GM12878 (cell line): ENCODE measurements at regions of chr9 and their contacts with region 1.

Region 1: DNA sequence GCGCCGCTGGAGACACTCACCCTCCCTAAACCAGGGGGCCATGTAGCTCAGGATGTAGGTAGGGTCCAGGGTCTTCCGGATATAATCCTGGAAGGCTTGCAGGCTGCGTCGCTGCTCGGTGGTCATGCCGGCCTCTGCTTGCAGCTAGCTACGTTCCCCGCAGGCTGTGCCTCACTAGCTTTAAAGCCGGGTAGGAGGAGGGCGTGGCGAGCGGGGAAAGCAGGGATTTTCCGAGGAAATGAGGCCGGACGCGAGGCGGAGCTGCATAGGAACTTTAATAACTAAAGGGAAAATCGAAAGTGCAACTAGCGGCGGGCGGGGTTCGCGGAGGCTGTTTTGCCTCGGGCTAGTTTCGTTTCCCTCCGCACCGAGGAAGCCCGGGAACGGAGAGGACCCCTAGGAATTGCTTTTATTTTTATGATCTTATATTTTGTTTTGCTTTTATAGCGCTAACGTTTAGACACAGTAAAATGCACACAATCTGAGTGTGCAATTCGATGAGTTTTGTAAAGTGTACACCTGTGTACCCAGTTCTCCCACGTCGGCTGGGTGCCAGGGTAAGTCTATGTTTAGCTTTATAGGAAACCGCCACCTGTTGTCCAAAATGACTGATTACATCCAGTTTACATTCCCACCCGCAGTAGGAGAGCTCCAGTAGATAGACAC is at the start of gene RIGI:
- DNase-seq: peak; percentile 51
- ATAC-seq: peak; percentile 76
- H3K4me3 ChIP-seq: peak within 1 kb of the TSS; percentile 98
- H3K27ac ChIP-seq: peak within 1 kb of the TSS; percentile 84
- H3K4me1 ChIP-seq: no peaks in the 10 kb centered on the region; the same call in 1 of the 2 replicates
- H3K27me3 ChIP-seq: no peaks in the 10 kb centered on the region
- CTCF ChIP-seq: peak; percentile 24 to 39 (median 34); a peak in 5 of 6 replicates
- EP300 ChIP-seq: no peak
- POLR2A ChIP-seq: peak; percentile 62
- RAD21 ChIP-seq: peak; percentile 21; the same call in 1 of the 2 replicates
- polyA plus RNA-seq, gene RIGI: 6.3 to 7.2 TPM

Region 2: GRCh38 chr9:32384364-32385151 is 141.6 kb before region 1 on chr9 and contains the start of gene ACO1:
- CTCF ChIA-PET with region 1: interaction called, 58 read pairs
- POLR2A ChIA-PET with region 1: interaction called, 9 read pairs
- RAD21 ChIA-PET with region 1: interaction called, 36 read pairs
- SMC1A ChIA-PET with region 1: interaction called, 40 read pairs
- in situ Hi-C with region 1: no loop called
- intact Hi-C with region 1: no loop called
- DNase-seq: peak; percentile 28
- ATAC-seq: peak; percentile 99
- H3K4me3 ChIP-seq: peak within 1 kb of the TSS; percentile 69
- H3K27ac ChIP-seq: no peak within 1 kb of the TSS
- H3K4me1 ChIP-seq: 0 out of 2 replicates have a peak, but pooled peaks cover 3% of the 10 kb centered on the region
- H3K27me3 ChIP-seq: no peaks in the 10 kb centered on the region; a peak in 2 of 4 replicates
- CTCF ChIP-seq: peak in 1 of 3 experiments; percentile 24; a peak in 1 of 6 replicates
- EP300 ChIP-seq: no peak
- POLR2A ChIP-seq: peak; percentile 82
- RAD21 ChIP-seq: no peak
- polyA plus RNA-seq, gene ACO1: 0.21 to 0.53 TPM

Region 3: DNA sequence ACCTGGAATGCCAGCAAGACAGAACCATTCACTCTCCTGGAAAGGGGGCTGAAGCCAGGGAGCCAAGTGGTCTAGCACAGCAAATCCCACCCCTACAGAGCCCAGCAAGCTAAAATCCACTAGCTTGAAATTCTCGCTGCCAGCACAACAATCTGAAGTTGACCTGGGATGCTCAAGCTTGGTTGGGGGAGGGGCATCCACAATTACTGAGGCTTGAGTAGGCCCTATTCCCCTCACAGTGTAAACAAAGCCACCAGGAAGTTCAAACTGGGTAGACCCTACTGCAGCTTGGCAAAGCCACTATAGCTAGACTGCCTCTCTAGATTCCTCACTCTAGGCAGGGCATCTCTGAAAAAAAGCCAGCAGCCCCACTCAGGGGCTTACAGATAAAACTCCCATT is 17.4 kb before region 1 on chr9:
- CTCF ChIA-PET with region 1: interaction called, 12 read pairs
- POLR2A ChIA-PET with region 1: interaction called, 3 read pairs
- RAD21 ChIA-PET with region 1: no interaction called
- SMC1A ChIA-PET with region 1: interaction called, 6 read pairs
- in situ Hi-C with region 1: no loop called
- intact Hi-C with region 1: no loop called
- DNase-seq: no peak
- ATAC-seq: no peak
- H3K4me3 ChIP-seq: no peak overlapping the region
- H3K27ac ChIP-seq: no peak overlapping the region
- H3K4me1 ChIP-seq: no peaks in the 10 kb centered on the region
- H3K27me3 ChIP-seq: no peaks in the 10 kb centered on the region
- CTCF ChIP-seq: no peak
- EP300 ChIP-seq: no peak
- POLR2A ChIP-seq: no peak
- RAD21 ChIP-seq: no peak

Region 4: DNA sequence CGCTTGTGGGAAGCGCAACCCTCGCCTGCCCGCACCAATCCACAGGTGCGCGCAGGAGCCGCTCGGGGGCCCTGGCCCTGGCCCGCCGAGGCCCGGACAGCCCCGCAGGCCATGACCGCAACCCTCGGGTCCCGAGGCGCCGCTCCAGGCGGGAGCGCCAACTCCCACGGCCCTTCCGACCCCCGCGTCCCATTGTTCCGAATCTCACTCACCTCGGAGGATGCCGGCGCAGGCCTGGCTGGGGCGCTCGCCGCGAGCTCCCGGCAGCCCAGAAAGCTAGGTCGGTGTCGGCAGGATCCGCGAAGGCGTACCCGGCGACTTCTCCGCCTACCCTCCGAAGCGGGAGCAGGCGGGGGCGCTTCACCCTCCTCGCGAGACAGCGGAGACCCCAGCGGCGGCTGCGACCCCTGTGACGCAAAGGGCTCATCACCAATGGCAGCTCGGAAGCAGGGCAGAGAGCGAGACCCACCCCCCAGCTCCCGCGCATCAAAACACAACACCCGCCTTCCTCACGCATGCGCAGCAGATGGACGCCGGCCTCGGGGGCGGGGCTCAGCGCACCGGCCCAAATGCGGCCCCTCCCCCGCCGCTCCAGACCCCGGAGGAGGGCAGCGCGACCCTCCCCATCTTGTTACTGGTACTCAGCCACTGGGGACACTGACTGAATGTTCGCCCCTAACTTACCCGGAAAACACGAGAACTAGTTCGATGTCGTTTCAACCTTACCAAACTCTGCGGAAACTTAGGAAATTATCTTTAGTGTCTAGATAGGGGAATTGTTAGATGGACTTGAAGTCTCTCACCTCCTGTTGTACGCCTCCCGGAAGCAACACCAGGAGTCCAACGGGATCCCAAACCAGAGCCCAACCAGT is 24.6 kb after region 1 on chr9:
- CTCF ChIA-PET with region 1: interaction called, 22 read pairs
- POLR2A ChIA-PET with region 1: interaction called, 19 read pairs
- RAD21 ChIA-PET with region 1: interaction called, 23 read pairs
- SMC1A ChIA-PET with region 1: interaction called, 29 read pairs
- in situ Hi-C with region 1: no loop called
- intact Hi-C with region 1: loop called (anchors 1 kb)
- DNase-seq: peak; percentile 64
- ATAC-seq: peak; percentile 79
- H3K4me3 ChIP-seq: peak overlapping the region; percentile 83
- H3K27ac ChIP-seq: peak overlapping the region; percentile 96
- H3K4me1 ChIP-seq: peaks cover 8% of the 10 kb centered on the region
- H3K27me3 ChIP-seq: no peaks in the 10 kb centered on the region
- CTCF ChIP-seq: 0 out of 6 replicates have a peak, but pooled peaks of 2 of the 3 experiments have one; percentile 16
- EP300 ChIP-seq: no peak
- POLR2A ChIP-seq: peak; percentile 75
- RAD21 ChIP-seq: no peak